ENCODE measurements at regions of chr12 and their contacts with region 1.

Region 1: GRCh38 chr12:63103494-63104131 is 47.4 kb downstream of the AVPR1A start:
- DNase-seq: no peak
- H3K4me3 ChIP-seq: no peak overlapping the region
- H3K27ac ChIP-seq: no peak overlapping the region
- H3K27me3 ChIP-seq: peaks cover 0 to 2% (median 0%) of the 10 kb centered on the region in 45 donors
- CTCF ChIP-seq: peak; percentile 67 to 92 (median 81)

Region 2: DNA sequence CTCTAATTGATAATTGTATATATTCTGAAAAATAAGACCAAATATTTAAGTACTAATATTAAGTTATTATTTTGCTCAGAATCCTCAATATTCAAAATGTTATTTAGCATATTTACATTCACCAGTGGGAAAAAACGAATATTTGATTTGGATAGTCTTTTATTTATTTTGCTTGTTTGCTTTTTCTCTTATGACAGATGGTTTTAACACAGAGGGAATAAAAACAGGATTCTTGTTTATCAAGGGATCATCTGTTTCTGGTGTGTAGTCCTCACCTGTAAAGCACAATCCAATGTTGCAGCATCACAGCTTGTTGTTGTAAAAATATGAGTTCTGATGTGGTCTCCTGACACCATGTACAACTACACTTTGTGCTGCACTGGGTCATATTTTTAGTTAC is 56.5 kb before region 1 on chr12:
- intact Hi-C with region 1: no loop called
- DNase-seq: no peak
- H3K4me3 ChIP-seq: no peak overlapping the region
- H3K27ac ChIP-seq: no peak overlapping the region
- H3K27me3 ChIP-seq: peaks cover 0 to 3% (median 0%) of the 10 kb centered on the region in 45 donors
- CTCF ChIP-seq: no peak

Region 3: DNA sequence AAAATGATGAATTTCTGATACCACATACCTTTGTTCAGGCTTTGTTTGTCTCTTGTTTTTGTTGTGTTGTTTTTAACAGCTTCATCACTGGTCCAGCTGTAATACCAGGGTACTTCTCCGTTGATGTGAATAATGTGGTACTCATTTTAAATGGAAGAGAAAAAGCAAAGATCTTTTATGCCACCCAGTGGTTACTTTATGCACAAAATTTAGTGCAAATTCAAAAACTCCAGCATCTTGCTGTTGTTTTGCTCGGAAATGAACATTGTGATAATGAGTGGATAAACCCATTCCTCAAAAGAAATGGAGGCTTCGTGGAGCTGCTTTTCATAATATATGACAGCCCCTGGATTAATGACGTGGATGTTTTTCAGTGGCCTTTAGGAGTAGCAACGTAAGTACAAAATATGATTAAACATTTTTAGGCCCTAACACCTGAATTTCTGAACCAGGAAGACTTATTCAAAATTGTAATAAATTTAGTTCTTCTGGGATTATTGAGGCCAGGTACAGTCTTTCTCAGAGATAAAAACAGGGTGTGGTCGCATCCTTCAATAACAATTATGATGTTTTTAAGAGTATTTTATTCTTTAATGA is 698.5 kb after region 1 on chr12:
- intact Hi-C with region 1: loop called (anchors 5 to 10 kb)
- DNase-seq: no peak
- H3K4me3 ChIP-seq: no peak overlapping the region
- H3K27ac ChIP-seq: no peak overlapping the region
- H3K27me3 ChIP-seq: no peaks in the 10 kb centered on the region
- CTCF ChIP-seq: peak; percentile 64 to 93 (median 78)